K562 (cell line): ENCODE measurements at regions of chr5 and their contacts with region 1.

Region 1: DNA sequence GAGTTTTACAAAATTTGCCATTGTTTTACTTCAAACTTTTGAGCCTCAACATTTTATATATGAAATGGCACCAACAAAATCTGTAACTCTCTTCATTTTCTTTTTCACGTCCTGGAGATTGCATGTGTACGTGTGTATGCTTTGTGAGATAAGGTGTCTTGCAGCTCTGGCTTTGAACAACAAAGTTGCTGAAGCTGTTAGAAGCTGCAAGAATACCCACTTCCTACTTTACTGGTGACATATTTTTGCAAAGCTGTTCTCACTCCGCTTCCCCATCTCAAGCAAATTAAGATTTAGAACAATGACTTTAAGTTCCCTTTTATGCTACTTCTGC is 41.8 kb downstream of the FYB1 start:
- DNase-seq: peak in 2 of 4 experiments; percentile 45 to 66
- ATAC-seq: peak; percentile 71
- H3K4me3 ChIP-seq: no peak overlapping the region
- H3K27ac ChIP-seq: peak overlapping the region; percentile 62
- H3K4me1 ChIP-seq: peaks cover 20 to 53% of the 10 kb centered on the region in 2 experiments
- H3K27me3 ChIP-seq: no peaks in the 10 kb centered on the region
- CTCF ChIP-seq: no peak
- EP300 ChIP-seq: peak; percentile 48; the same call in 1 of the 2 replicates
- POLR2A ChIP-seq: no peak
- RAD21 ChIP-seq: 0 out of 4 replicates have a peak, but pooled peaks of 1 of the 2 experiments have one; percentile 4

Region 2: DNA sequence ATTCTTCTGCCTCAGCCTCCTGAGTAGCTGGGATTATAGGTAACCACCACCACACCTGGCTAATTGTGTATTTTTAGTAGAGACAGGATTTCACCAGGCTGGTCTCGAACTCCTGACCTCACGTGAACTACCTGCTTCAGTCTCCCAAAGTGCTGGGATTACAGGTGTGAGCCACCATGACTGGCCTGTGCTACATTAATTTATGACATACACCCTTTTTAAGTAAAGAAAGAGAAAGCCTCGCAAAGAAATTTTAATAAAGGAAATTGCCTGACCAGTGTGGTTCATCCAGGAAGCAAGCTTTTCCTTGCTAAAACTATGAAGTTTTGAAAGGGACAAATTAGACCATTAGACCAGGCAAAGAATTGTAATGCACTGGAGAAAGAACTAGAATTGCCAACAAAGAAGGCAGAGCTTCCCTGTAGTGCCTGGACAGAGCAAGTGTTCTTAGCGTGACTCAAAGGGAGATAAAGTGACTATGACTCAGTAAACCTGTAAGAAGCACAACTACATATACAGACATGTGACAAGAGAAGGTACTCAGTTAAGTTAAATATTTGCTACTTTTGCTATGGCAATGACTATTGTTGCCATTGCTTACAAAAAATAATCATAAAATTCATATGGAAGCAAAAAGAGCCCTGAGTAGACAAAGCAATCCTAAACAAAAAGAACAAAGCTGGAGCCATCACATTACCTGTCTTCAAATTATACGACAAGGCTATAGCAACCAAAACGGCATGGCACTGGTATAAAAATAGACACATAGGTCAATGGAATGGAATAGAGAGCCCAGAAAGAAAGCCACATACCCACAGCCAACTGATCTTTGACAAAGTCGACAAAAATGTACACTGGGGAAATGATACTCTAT is 12.8 kb before region 1 on chr5:
- CTCF ChIA-PET with region 1: no interaction called
- POLR2A ChIA-PET with region 1: interaction called, 14 read pairs
- in situ Hi-C with region 1: no loop called
- intact Hi-C with region 1: no loop called
- DNase-seq: peak; percentile 40 to 75 (median 60)
- ATAC-seq: peak; percentile 87
- H3K4me3 ChIP-seq: no peak overlapping the region
- H3K27ac ChIP-seq: peak overlapping the region; percentile 73
- H3K4me1 ChIP-seq: peaks cover 0 to 30% of the 10 kb centered on the region in 2 experiments; a peak in 4 of 5 replicates
- H3K27me3 ChIP-seq: no peaks in the 10 kb centered on the region
- CTCF ChIP-seq: 0 out of 6 replicates have a peak, but pooled peaks of 1 of the 3 experiments have one; percentile 2
- EP300 ChIP-seq: no peak
- POLR2A ChIP-seq: no peak
- RAD21 ChIP-seq: 0 out of 4 replicates have a peak, but pooled peaks of 1 of the 2 experiments have one; percentile 4

Region 3: DNA sequence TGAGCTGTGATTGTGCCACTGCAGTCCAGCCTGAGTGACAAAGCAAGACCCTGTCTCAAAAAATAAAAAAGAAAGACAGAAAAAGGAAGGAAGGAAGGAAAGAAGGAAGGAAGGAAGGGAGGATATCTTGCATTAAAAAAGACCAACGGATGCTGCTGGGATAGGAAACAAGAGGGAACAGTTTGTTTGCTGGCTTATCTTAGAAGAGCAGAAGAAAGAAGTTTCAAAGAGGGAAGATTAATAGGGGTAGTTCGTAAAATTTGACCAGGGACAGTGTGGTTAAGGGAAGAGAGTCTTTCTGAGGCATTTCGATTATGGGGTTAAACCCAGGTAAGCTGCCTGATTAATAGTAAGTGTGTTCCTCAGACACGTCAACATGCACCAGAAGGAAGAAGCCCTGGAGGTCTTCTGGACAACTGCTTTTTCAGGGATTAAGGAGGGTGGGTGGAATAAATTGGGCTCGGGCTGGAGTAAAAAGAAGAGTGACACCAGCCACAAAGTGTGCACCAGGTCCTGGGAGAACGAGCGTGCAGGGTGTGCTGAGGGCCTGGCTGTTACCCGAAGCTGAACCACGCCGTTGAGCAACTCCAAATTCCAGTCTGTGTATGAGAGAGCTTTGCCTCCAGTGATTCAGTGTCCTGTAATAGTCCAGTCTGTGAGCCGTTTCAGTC is 17.0 kb after region 1 on chr5:
- CTCF ChIA-PET with region 1: no interaction called
- POLR2A ChIA-PET with region 1: interaction called, 5 read pairs
- in situ Hi-C with region 1: no loop called
- intact Hi-C with region 1: loop called (anchors 2 kb)
- DNase-seq: peak; percentile 28 to 80 (median 57)
- ATAC-seq: peak; percentile 80
- H3K4me3 ChIP-seq: no peak overlapping the region
- H3K27ac ChIP-seq: peak overlapping the region; percentile 75
- H3K4me1 ChIP-seq: peaks cover 31 to 81% of the 10 kb centered on the region in 2 experiments; a peak in 4 of 5 replicates
- H3K27me3 ChIP-seq: no peaks in the 10 kb centered on the region
- CTCF ChIP-seq: no peak
- EP300 ChIP-seq: peak; percentile 97
- POLR2A ChIP-seq: no peak
- RAD21 ChIP-seq: no peak; a peak in 2 of 4 replicates